Activated CD8-positive, alpha-beta memory T cell treated with anti-CD3 and anti-CD28 coated beads, Interleukin-2, amount 10 ng/mL, durations not matched to agents 7 days and 5 days (primary cell): ENCODE measurements at regions of chr22 and their contacts with region 1.

Region 1: GRCh38 chr22:26461188-26461810 is 22.3 kb downstream of the HPS4 start:
- DNase-seq: peak; percentile 52
- ATAC-seq: peak; percentile 63
- H3K4me3 Mint-ChIP-seq: no peak overlapping the region
- H3K27ac Mint-ChIP-seq: no peak overlapping the region
- H3K4me1 Mint-ChIP-seq: no peaks in the 10 kb centered on the region
- H3K27me3 Mint-ChIP-seq: no peaks in the 10 kb centered on the region

Region 2: GRCh38 chr22:26364066-26365015 is 97.0 kb before region 1 on chr22:
- CTCF ChIA-PET with region 1: interaction called, 62 read pairs
- DNase-seq: peak; percentile 76
- ATAC-seq: peak; percentile 86
- H3K4me3 Mint-ChIP-seq: no peak overlapping the region
- H3K27ac Mint-ChIP-seq: no peak overlapping the region
- H3K4me1 Mint-ChIP-seq: peaks cover 2% of the 10 kb centered on the region
- H3K27me3 Mint-ChIP-seq: peaks cover 14% of the 10 kb centered on the region

Region 3: DNA sequence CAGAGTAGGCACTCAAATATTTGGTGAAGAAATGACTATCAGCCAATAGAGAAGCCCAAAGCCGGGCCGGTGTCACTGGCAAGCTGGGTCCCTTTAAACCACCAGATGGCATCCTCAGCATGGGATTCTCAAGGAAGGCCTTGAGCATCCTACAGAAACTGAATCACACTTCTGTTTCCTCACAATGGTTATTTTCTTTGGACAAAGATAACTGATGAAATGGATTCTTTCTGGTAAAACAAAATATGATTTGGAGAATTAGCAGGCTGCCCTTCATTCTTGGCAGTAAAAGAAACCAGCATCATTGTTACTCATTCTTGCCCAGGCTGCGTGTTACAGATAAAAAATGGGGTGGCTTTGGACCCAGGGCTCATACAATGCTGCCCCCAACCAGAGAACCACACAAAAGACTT is 62.6 kb before region 1 on chr22:
- CTCF ChIA-PET with region 1: interaction called, 20 read pairs
- DNase-seq: peak; percentile 72
- ATAC-seq: peak; percentile 78
- H3K4me3 Mint-ChIP-seq: no peak overlapping the region
- H3K27ac Mint-ChIP-seq: no peak overlapping the region
- H3K4me1 Mint-ChIP-seq: peaks cover 5% of the 10 kb centered on the region
- H3K27me3 Mint-ChIP-seq: peaks cover 8% of the 10 kb centered on the region

Region 4: GRCh38 chr22:26428515-26429457 is 32.5 kb before region 1 on chr22 and contains the start of gene ASPHD2:
- CTCF ChIA-PET with region 1: interaction called, 16 read pairs
- DNase-seq: peak; percentile 86
- ATAC-seq: peak; percentile 89
- H3K4me3 Mint-ChIP-seq: peak within 1 kb of the TSS; percentile 96
- H3K27ac Mint-ChIP-seq: peak within 1 kb of the TSS; percentile 97
- H3K4me1 Mint-ChIP-seq: peaks cover 54% of the 10 kb centered on the region
- H3K27me3 Mint-ChIP-seq: peaks cover 10% of the 10 kb centered on the region
- total RNA-seq, gene ASPHD2: 15.3 to 17.0 TPM

Region 5: GRCh38 chr22:26436903-26437515 is 24.3 kb before region 1 on chr22:
- CTCF ChIA-PET with region 1: interaction called, 13 read pairs
- DNase-seq: no peak
- ATAC-seq: no peak
- H3K4me3 Mint-ChIP-seq: no peak overlapping the region
- H3K27ac Mint-ChIP-seq: peak overlapping the region; percentile 33
- H3K4me1 Mint-ChIP-seq: peaks cover 56% of the 10 kb centered on the region
- H3K27me3 Mint-ChIP-seq: no peaks in the 10 kb centered on the region

Region 6: GRCh38 chr22:26445577-26446275 is 15.6 kb before region 1 on chr22:
- CTCF ChIA-PET with region 1: interaction called, 10 read pairs
- DNase-seq: no peak
- ATAC-seq: no peak
- H3K4me3 Mint-ChIP-seq: no peak overlapping the region
- H3K27ac Mint-ChIP-seq: no peak overlapping the region
- H3K4me1 Mint-ChIP-seq: peaks cover 1% of the 10 kb centered on the region
- H3K27me3 Mint-ChIP-seq: no peaks in the 10 kb centered on the region

Region 7: GRCh38 chr22:26483439-26484359 is 22.4 kb after region 1 on chr22 and contains the starts of genes HPS4 and SRRD:
- CTCF ChIA-PET with region 1: interaction called, 15 read pairs
- DNase-seq: peak; percentile 92
- ATAC-seq: peak; percentile 84
- H3K4me3 Mint-ChIP-seq: peak within 1 kb of the TSS; percentile 93
- H3K27ac Mint-ChIP-seq: peak within 1 kb of the TSS; percentile 88
- H3K4me1 Mint-ChIP-seq: peaks cover 67% of the 10 kb centered on the region
- H3K27me3 Mint-ChIP-seq: no peaks in the 10 kb centered on the region
- total RNA-seq, gene HPS4: 39.3 to 41.2 TPM
- total RNA-seq, gene SRRD: 17.5 to 22.6 TPM